Pancreas (tissue), 10 donors: ENCODE measurements at regions of chr17 and their contacts with region 1.

Region 1: GRCh38 chr17:22266231-22266630 is 573.9 kb downstream of the KCNJ18 start:
- DNase-seq: no peak
- ATAC-seq: no peak
- H3K4me3 ChIP-seq: no peak overlapping the region
- H3K27ac ChIP-seq: no peak overlapping the region
- H3K4me1 ChIP-seq: no peaks in the 10 kb centered on the region
- H3K27me3 ChIP-seq: no peaks in the 10 kb centered on the region
- CTCF ChIP-seq: no peak

Region 2: DNA sequence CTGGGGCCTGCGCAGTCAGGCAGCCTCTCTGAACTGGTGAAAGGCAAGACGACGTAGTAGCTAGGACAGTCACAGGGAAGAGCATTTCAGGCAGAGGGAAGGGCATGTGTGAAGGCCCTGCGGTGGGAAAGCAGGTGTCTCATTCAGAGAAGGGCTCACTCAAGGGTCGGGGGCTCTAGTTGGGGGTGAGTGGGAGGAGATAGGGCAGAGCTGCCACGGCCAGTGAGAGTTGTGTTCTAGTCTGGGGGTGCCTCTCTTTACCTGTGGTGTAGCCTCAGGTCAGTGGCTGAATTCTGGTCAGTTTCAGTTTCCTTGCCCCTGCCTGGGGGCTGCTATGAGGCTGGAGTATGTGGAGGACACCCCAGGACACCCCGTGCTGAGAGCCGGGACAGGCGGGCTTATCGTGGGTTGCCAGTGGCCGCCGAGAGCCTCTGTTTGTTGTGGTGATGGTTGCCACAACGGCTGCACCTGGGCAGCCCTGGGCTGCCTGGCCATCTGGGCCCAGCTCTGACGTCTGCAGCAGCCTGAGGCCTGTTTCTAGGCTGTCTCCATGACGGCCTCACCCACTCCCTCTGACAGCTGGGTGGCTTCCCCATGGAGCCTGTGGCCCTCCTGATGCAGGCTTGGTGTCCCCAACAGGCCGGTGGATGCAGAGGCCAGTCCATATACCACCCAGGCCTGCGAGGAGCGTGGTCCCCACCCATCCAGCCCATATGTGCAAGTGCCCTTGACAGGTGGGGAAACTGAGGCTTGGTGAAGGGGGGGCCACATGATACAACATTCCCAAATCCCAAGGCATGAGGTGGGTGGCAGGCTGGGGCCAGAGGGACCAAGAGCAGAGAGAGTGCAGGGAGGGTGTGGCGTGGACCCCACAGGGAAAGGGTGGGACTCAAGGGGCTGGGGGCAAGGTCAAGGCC is 970.9 kb before region 1 on chr17:
- intact Hi-C with region 1: loop called in 1 of 3 experiments (anchors 10 kb)
- DNase-seq: peak in 3 of 6 donors; percentile 77 to 87 (median 79)
- ATAC-seq: peak; percentile 66 to 81 (median 78)
- H3K4me3 ChIP-seq: no peak overlapping the region
- H3K27ac ChIP-seq: no peak overlapping the region
- H3K4me1 ChIP-seq: peaks cover 0 to 14% (median 2%) of the 10 kb centered on the region in 3 donors
- H3K27me3 ChIP-seq: no peaks in the 10 kb centered on the region
- CTCF ChIP-seq: no peak

Region 3: DNA sequence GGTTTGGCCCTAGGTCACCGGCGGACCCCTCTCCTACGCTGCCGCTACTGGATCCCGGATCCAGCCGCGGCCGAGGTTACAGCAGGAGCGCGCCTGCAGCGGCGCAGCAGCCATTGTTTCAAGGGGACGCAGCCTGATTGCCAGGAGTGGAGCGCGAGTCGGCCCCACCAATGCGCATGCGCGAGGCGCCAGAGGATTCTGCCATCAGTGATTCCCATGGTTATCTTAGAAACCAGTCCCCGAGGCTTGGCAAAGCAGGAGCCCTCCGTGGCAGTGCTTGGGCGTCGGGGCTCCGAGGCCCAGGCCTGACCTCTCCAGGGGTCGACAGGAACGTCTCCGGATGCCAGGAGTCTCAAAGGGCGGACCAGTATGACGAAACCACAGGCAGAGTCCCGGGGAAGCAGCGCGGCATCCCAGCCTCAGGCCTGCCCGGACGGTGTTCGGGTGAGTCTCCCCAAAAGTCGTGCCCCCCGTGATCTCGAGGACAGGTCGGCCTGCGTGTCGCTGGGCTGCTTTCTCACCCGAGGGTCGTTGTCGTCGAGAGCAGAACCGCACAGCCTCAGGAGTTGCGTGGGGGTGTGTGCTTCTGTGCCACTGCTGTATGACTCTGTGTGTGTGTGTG is 34.6 kb after region 1 on chr17:
- intact Hi-C with region 1: no loop called
- DNase-seq: peak in 1 of 6 donors; percentile 52
- ATAC-seq: no peak
- H3K4me3 ChIP-seq: no peak overlapping the region
- H3K27ac ChIP-seq: no peak overlapping the region
- H3K4me1 ChIP-seq: no peaks in the 10 kb centered on the region
- H3K27me3 ChIP-seq: no peaks in the 10 kb centered on the region
- CTCF ChIP-seq: no peak

Region 4: DNA sequence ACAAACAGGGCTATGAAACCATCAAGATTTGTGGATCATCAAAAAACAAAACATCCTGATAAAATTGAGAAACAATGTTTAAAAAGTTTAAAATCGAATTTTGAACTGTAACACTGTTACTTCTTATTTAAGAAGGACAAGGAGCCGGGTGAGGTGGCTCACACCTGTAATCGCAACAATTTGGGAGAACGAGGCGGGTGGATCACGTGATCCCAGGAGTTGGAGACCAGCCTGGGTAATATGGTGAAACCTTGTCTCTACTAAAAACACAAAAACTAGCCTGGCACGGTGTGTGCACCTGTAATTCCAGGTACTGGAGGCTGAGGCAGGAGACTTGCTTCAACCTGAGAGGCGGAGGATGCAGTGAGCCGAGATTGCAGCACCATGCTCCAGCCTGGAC is 54.1 kb after region 1 on chr17:
- intact Hi-C with region 1: no loop called
- DNase-seq: no peak
- ATAC-seq: no peak
- H3K4me3 ChIP-seq: no peak overlapping the region
- H3K27ac ChIP-seq: no peak overlapping the region
- H3K4me1 ChIP-seq: no peaks in the 10 kb centered on the region
- H3K27me3 ChIP-seq: no peaks in the 10 kb centered on the region
- CTCF ChIP-seq: no peak

Region 5: GRCh38 chr17:22409160-22409751 is 143.0 kb after region 1 on chr17:
- intact Hi-C with region 1: no loop called
- DNase-seq: peak in 1 of 6 donors; percentile 40
- ATAC-seq: no peak
- H3K4me3 ChIP-seq: no peak overlapping the region
- H3K27ac ChIP-seq: no peak overlapping the region
- H3K4me1 ChIP-seq: no peaks in the 10 kb centered on the region
- H3K27me3 ChIP-seq: no peaks in the 10 kb centered on the region
- CTCF ChIP-seq: no peak

Region 6: GRCh38 chr17:22463110-22463850 is 197.0 kb after region 1 on chr17:
- intact Hi-C with region 1: no loop called
- DNase-seq: no peak
- ATAC-seq: no peak
- H3K4me3 ChIP-seq: no peak overlapping the region
- H3K27ac ChIP-seq: no peak overlapping the region
- H3K4me1 ChIP-seq: no peaks in the 10 kb centered on the region
- H3K27me3 ChIP-seq: no peaks in the 10 kb centered on the region
- CTCF ChIP-seq: no peak